ENCODE measurements at regions of chr1 and their contacts with region 1.

Region 1: DNA sequence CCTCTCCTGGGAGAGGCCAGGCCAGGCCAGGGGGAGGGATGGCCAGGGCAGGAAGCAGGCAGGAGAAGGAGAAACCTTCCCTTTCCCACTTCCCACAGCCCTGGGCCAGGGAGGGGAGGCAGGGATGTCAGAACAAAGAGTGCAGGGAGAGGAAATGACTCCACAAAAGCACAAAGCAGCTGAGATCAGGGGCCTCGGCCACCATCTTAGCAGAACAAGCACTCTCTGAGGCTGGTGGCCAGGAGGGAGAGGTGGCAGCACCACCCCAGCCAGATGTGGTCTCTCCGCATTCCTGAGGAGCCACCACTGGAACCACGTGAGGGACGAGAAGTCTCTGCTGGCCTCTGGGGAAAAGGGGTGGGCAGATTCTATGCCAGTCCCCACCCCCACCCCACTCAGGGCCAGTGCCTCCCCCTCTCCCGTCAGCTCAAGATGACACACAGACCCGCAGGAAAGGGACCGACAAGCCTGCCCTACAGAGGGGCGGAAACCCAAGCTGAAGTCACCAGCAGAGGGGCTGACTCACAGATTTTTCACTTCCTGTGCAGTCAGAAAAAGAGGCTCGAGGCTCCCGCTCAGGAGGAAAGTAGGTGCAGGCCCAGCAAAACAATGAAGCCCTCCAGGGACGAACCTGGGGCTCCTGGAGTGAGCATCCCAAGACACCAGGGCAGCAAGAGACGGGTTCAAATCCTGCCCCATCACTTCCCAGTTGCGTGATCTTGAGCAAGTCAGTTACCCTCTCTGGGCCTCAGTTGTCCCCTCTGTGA is 24.1 kb upstream of the ALDH4A1 start:
- DNase-seq: peak; percentile 95
- H3K4me3 ChIP-seq: no peak overlapping the region
- H3K27ac ChIP-seq: peak overlapping the region; percentile 97
- H3K4me1 ChIP-seq: peaks cover 66% of the 10 kb centered on the region
- H3K27me3 ChIP-seq: no peaks in the 10 kb centered on the region
- CTCF ChIP-seq: no peak
- POLR2A ChIP-seq: peak; percentile 44

Region 2: GRCh38 chr1:18941221-18942141 is 15.0 kb after region 1 on chr1:
- CTCF ChIA-PET with region 1: interaction called, 26 read pairs
- POLR2A ChIA-PET with region 1: interaction called, 7 read pairs
- dilution Hi-C with region 1: no loop called
- intact Hi-C with region 1: loop called (anchors 1 kb)
- DNase-seq: peak; percentile 63
- H3K4me3 ChIP-seq: no peak overlapping the region
- H3K27ac ChIP-seq: peak overlapping the region; percentile 60
- H3K4me1 ChIP-seq: peaks cover 28% of the 10 kb centered on the region
- H3K27me3 ChIP-seq: no peaks in the 10 kb centered on the region
- CTCF ChIP-seq: no peak
- POLR2A ChIP-seq: no peak

Region 3: DNA sequence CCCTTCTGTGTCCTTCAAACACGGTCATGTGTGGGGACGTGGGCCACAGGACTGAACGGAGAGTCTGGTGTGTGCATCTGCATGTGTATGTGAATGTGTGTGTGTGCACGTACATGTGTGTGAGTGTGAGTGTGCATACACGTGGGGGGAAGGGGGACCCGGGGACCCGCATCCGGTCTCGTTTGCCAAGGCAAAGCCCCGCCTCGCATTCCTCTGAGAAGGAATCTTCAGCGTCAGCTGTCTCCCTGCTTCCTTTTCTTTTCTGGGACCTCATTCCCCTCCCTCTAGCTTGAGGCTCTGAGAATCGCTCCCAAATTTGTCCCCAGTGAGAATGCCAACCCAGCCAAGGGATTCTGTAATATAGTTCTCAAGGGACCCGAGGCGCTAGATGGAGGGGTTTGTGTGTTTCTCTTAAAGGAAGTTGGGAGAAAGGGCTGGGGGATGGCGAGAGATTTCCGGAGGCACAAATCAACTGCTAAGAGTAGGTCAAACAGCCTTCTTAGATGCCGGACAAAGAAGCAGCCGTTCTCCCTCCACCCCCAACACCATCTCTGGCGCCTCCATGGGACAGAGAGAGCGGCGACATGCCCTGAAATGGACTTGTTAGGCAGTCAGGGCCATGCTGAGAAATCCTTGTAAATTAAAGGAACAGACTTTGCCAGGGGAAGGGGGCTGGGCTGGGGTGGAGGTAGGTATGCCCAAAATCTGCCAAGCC is 23.3 kb after region 1 on chr1:
- CTCF ChIA-PET with region 1: interaction called, 32 read pairs
- POLR2A ChIA-PET with region 1: interaction called, 4 read pairs
- dilution Hi-C with region 1: no loop called
- intact Hi-C with region 1: loop called (anchors 1 kb)
- DNase-seq: peak; percentile 73
- H3K4me3 ChIP-seq: peak overlapping the region in 1 of 3 experiments; percentile 4
- H3K27ac ChIP-seq: peak overlapping the region; percentile 78
- H3K4me1 ChIP-seq: peaks cover 53% of the 10 kb centered on the region
- H3K27me3 ChIP-seq: no peaks in the 10 kb centered on the region
- CTCF ChIP-seq: peak in 1 of 2 donors; percentile 23
- POLR2A ChIP-seq: no peak

Region 4: GRCh38 chr1:18956369-18957135 is 30.1 kb after region 1 on chr1 and contains the start of gene IFFO2:
- CTCF ChIA-PET with region 1: interaction called, 32 read pairs
- POLR2A ChIA-PET with region 1: interaction called, 17 read pairs
- dilution Hi-C with region 1: no loop called
- intact Hi-C with region 1: loop called (anchors 1 kb)
- DNase-seq: peak; percentile 93
- H3K4me3 ChIP-seq: peak within 1 kb of the TSS; percentile 84 to 89 (median 86)
- H3K27ac ChIP-seq: peak within 1 kb of the TSS; percentile 82
- H3K4me1 ChIP-seq: peaks cover 25% of the 10 kb centered on the region
- H3K27me3 ChIP-seq: peaks cover 4 to 9% of the 10 kb centered on the region in 2 experiments
- CTCF ChIP-seq: no peak
- POLR2A ChIP-seq: peak; percentile 88
- total RNA-seq, gene IFFO2: 31.1 and 35.1 TPM in 2 replicates

Region 5: DNA sequence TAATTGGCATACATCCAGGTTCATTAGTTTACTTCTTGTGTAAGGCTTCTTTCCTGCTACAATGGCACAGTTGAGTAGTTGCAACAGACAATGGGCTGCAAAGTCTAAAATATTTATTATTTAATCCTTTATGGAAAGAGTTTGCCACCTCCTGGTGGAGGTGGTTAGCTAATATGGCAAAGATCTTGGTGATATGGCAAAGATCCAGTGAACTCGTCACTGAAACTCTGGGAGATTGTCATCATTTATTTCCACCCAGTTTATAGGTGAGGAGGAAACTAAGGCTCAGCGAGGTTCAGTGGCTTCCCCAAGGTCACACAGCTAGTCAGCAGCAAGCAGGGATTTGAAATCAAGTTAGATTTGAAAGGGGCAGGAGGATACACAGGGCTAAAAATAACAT is 46.0 kb after region 1 on chr1:
- CTCF ChIA-PET with region 1: interaction called, 22 read pairs
- POLR2A ChIA-PET with region 1: interaction called, 4 read pairs
- dilution Hi-C with region 1: no loop called
- intact Hi-C with region 1: loop called (anchors 1 kb)
- DNase-seq: peak; percentile 60
- H3K4me3 ChIP-seq: no peak overlapping the region
- H3K27ac ChIP-seq: peak overlapping the region; percentile 19
- H3K4me1 ChIP-seq: peaks cover 15% of the 10 kb centered on the region
- H3K27me3 ChIP-seq: no peaks in the 10 kb centered on the region
- CTCF ChIP-seq: peak in 1 of 2 donors; percentile 21
- POLR2A ChIP-seq: no peak

Region 6: GRCh38 chr1:19010995-19011844 is 84.7 kb after region 1 on chr1:
- CTCF ChIA-PET with region 1: interaction called, 6 read pairs
- POLR2A ChIA-PET with region 1: no interaction called
- dilution Hi-C with region 1: no loop called
- intact Hi-C with region 1: loop called (anchors 1 kb)
- DNase-seq: peak; percentile 89
- H3K4me3 ChIP-seq: no peak overlapping the region
- H3K27ac ChIP-seq: peak overlapping the region; percentile 84
- H3K4me1 ChIP-seq: peaks cover 31% of the 10 kb centered on the region
- H3K27me3 ChIP-seq: no peaks in the 10 kb centered on the region
- CTCF ChIP-seq: no peak
- POLR2A ChIP-seq: no peak

Region 7: DNA sequence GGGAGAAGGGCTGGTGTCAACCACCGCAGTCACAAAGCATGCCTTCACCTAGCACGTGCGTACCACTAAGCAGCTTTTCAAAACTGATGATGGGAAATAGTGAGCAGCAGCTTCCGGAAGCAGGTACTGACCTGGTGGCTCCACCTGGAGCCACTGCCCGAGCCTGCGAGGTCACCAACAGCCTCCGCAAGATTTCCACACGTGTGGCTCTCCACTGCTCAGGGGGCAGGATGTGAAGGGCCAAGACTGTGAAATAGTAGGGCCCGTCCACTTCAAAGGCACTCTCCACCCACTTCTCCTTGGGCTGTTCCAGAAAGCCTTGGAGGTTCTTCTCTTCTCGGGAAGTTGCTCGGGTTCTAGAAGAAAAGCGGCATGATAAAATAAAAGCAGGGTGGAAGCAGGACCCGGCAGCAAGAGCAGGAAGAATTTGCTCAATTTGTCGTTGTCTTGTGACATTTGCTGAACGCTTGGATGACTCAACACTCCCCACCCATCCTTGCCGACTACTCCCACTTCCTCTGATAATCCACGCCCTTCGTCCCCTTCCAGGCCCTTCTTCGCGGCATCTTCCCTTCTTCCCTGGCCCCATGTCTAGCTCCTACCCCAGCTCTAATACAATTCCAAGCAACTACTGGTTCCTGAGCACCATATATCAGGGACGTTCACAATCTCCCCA is 154.9 kb after region 1 on chr1:
- CTCF ChIA-PET with region 1: no interaction called
- POLR2A ChIA-PET with region 1: interaction called, 3 read pairs
- dilution Hi-C with region 1: no loop called
- intact Hi-C with region 1: loop called (anchors 1 kb)
- DNase-seq: peak; percentile 52
- H3K4me3 ChIP-seq: no peak overlapping the region
- H3K27ac ChIP-seq: peak overlapping the region; percentile 84
- H3K4me1 ChIP-seq: peaks cover 42% of the 10 kb centered on the region
- H3K27me3 ChIP-seq: no peaks in the 10 kb centered on the region
- CTCF ChIP-seq: no peak
- POLR2A ChIP-seq: no peak